ENCODE measurements at regions of chr7 and their contacts with region 1.

Region 1: GRCh38 chr7:139901056-139901795 is 72.2 kb downstream of the TBXAS1 start:
- DNase-seq: no peak
- CTCF ChIP-seq: no peak

Region 2: GRCh38 chr7:139915864-139916716 is 14.9 kb after region 1 on chr7:
- CTCF ChIA-PET with region 1: interaction called, 14 read pairs
- POLR2A ChIA-PET with region 1: no interaction called
- DNase-seq: peak; percentile 77
- CTCF ChIP-seq: no peak

Region 3: GRCh38 chr7:140079121-140079536 is 177.9 kb after region 1 on chr7:
- CTCF ChIA-PET with region 1: no interaction called
- POLR2A ChIA-PET with region 1: no interaction called
- DNase-seq: no peak
- CTCF ChIP-seq: no peak